Motor neuron (in vitro differentiated cells): ENCODE measurements at regions of chr5 and their contacts with region 1.

Region 1: GRCh38 chr5:134289509-134290113 is 63.7 kb upstream of the PPP2CA start:
- ATAC-seq: peak; percentile 47 to 99 (median 88)
- H3K4me3 ChIP-seq: no peak overlapping the region
- H3K27ac ChIP-seq: no peak overlapping the region
- H3K4me1 ChIP-seq: no peaks in the 10 kb centered on the region

Region 2: GRCh38 chr5:133932441-133933168 is 357.0 kb before region 1 on chr5:
- in situ Hi-C with region 1: no loop called
- ATAC-seq: no peak
- H3K4me3 ChIP-seq: no peak overlapping the region
- H3K27ac ChIP-seq: no peak overlapping the region
- H3K4me1 ChIP-seq: no peaks in the 10 kb centered on the region

Region 3: DNA sequence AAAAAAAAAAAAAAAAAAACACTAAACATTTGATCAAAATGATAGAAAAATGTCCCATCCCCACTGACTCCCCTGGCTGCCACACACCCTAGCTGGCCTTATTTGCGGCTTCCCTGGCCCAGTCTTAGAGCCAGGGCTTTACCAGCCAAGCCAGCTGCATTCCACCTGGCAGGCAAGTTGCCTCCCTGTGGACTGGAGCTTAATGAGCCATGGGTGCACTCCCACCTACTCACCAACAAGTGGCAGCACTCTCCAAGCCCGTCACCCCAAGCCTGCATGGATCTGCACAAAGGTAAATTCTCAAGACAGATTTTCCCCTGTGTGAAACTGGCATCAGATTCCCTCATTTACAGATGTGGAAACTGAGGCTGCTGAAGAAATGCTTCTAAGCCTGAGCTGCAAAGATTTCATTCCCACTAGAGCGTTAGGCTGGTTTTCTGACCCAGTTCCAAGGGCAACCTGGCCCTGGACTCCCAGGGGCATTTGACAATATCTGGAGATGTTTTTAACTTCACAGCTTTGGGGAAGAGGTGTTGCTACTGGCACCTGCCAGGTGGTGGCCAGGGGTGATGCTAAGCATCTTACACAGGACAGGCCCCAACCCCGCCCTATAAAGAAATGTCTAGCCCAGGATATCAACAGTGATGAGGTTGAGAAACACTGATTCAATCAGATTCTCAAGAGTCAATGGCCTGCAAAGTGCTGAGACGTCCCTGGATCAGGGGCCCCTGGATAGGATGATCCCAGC is 262.9 kb before region 1 on chr5:
- in situ Hi-C with region 1: loop called in 4 of 9 experiments (anchors 25 kb)
- ATAC-seq: peak; percentile 39 to 99 (median 66)
- H3K4me3 ChIP-seq: no peak overlapping the region
- H3K27ac ChIP-seq: no peak overlapping the region
- H3K4me1 ChIP-seq: no peaks in the 10 kb centered on the region

Region 4: DNA sequence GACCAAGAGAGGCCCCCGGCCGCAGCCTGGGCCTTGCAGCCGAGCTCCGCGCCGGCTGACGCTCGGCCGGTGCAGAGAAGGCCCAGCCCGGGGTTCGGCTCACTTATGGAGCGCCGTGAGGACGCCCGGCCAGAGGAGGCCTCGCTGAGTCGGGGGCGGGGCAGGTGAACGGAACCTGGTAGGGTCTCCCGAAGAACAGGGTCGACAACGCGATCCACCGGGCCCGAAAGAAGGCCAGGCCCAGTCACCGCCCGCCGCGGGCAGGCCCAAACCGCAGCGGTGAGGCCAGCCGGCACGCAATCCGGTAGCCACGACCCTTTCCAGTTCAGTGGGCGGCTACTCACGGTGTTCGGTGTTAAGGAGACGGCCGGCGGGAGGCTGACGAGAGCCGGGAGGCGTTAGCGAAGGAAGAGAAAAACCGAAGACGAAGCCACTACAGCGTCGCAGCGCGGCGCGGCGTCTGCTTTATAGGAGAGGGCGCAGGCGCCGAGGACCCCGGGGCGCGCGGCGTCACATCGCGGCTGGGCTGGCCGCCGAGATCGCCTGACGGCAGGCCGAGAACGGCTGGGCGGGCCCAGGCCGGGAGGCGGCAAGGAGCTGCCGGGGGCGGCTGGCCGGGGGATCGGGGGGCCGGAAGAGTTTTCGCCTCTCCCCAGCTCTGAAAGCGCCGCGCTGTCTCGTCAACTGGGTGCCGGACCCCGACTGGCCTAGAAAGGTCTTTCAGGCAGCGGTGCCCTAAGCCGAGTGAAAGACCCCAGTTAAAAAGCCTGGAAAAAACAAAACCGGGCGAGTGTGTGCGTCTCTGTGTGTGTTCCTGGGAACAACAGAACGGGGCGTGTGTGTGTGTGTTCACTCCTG is 112.9 kb before region 1 on chr5 and contains the start of gene SKP1:
- in situ Hi-C with region 1: loop called in 5 of 9 experiments (anchors 10 to 25 kb)
- ATAC-seq: peak; percentile 68 to 88 (median 81)
- H3K4me3 ChIP-seq: peak within 1 kb of the TSS; percentile 74 to 99 (median 95)
- H3K27ac ChIP-seq: peak within 1 kb of the TSS; percentile 100
- H3K4me1 ChIP-seq: peaks cover 5 to 17% of the 10 kb centered on the region in 2 donors
- total RNA-seq, gene SKP1: 368 to 550 (median 471) TPM

Region 5: DNA sequence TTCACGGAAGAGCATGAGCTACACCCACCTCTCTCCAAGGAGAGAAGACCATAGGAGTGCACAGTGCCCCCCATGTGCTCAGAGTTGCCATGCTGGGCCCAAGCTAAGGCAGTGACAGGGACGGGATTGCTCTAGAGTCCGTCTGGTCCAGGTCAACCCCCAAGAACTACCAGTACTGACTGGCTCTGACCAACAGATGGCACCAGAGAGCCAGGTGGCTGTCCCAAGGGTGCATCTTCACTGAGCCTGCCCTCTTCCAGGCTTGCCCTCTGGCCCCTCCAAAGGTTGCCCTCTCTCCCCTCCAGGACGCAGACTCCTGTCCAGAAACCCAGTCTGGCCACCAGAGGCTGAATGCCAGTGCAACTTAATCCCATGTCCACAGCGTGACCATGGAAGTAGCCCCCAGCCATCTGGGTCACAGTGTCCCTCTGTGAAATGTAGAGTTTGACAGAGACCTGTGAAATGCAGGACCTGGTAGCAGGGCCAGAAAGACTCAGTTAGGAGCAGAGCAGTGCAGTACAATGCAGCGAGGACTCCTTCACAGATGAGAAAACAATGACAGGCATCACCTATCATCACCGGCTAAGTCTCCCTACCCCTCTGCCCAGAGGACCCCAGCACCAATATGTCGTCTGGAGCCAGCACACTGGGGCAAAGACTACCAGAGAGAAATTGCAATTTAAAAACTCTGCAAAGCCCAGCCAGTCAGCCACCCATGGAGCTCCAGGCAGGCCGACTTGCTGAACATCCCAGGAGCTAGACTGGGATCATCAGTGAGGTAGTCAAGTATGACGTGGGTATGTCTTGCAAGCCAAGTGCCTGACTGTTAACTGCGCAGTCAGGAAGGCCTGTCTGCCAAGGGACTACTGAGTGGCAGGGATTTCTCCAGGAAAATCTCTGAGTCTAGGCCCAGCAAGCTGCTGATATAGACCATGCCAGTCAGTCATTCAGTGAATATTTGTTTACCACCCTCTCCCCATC is 105.2 kb before region 1 on chr5:
- in situ Hi-C with region 1: loop called in 5 of 9 experiments (anchors 10 to 25 kb)
- ATAC-seq: peak; percentile 81 to 97 (median 88)
- H3K4me3 ChIP-seq: no peak overlapping the region
- H3K27ac ChIP-seq: no peak overlapping the region
- H3K4me1 ChIP-seq: no peaks in the 10 kb centered on the region